ENCODE measurements at regions of chr16 and their contacts with region 1.

Region 1: GRCh38 chr16:86575754-86576557 is 2.4 kb upstream of the FOXL1 start:
- DNase-seq: peak; percentile 83 to 86
- ATAC-seq: peak; percentile 80 to 88 (median 85)
- H3K4me3 ChIP-seq: peak overlapping the region; percentile 7 to 59 (median 49)
- H3K27ac ChIP-seq: peak overlapping the region; percentile 43 to 85 (median 71)
- H3K4me1 ChIP-seq: peaks cover 0 to 67% (median 28%) of the 10 kb centered on the region in 9 donors
- H3K27me3 ChIP-seq: peaks cover 7 to 100% (median 97%) of the 10 kb centered on the region in 7 donors
- CTCF ChIP-seq: peak in 8 of 9 donors; percentile 40 to 78 (median 61)

Region 2: DNA sequence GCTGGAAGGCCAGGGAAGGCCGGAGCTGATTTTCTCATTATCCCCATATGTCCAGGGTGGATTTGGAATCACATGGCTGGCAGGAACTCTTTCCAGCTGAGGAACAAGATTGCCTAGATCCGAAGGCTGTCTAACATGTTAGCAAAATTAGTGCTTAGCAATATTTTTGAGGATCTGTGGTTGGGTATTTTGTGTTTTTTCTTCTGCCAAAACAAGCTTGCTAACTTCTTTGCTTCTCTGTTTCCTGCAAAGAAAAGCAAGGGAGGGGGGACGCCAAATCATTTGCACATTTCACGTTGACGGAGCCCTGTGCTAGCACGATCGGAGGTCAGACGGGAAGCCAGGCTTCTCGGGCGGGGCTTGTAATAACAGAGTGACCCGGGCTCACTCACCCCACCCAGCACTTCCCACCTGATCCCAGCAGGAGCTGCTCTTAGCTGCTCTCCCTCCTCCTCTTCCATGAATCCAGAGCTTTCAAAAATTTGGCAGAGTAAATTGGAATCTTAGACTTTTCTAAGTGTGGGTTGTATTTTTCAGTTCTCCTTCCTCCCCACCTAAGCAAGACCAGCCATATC is 98.9 kb before region 1 on chr16:
- intact Hi-C with region 1: no loop called
- DNase-seq: peak in 1 of 2 donors; percentile 22
- ATAC-seq: peak in 6 of 8 donors; percentile 51 to 89 (median 61)
- H3K4me3 ChIP-seq: no peak overlapping the region
- H3K27ac ChIP-seq: no peak overlapping the region
- H3K4me1 ChIP-seq: peaks cover 0 to 13% (median 0%) of the 10 kb centered on the region in 9 donors
- H3K27me3 ChIP-seq: peaks cover 0 to 96% (median 78%) of the 10 kb centered on the region in 7 donors
- CTCF ChIP-seq: no peak

Region 3: GRCh38 chr16:86531191-86531545 is 44.8 kb before region 1 on chr16:
- intact Hi-C with region 1: no loop called
- DNase-seq: peak; percentile 50 to 69
- ATAC-seq: peak in 7 of 8 donors; percentile 57 to 79 (median 74)
- H3K4me3 ChIP-seq: no peak overlapping the region
- H3K27ac ChIP-seq: peak overlapping the region in 1 of 10 donors; percentile 26
- H3K4me1 ChIP-seq: peaks cover 0 to 8% (median 0%) of the 10 kb centered on the region in 9 donors
- H3K27me3 ChIP-seq: no peaks in the 10 kb centered on the region
- CTCF ChIP-seq: no peak

Region 4: GRCh38 chr16:86664533-86665318 is 88.8 kb after region 1 on chr16:
- intact Hi-C with region 1: loop called in 3 of 10 experiments (anchors 5 to 10 kb)
- DNase-seq: no peak
- ATAC-seq: peak in 2 of 8 donors; percentile 35 to 61
- H3K4me3 ChIP-seq: no peak overlapping the region
- H3K27ac ChIP-seq: peak overlapping the region in 6 of 10 donors; percentile 42 to 78 (median 52)
- H3K4me1 ChIP-seq: peaks cover 0 to 49% (median 25%) of the 10 kb centered on the region in 9 donors
- H3K27me3 ChIP-seq: peaks cover 0 to 38% (median 13%) of the 10 kb centered on the region in 7 donors
- CTCF ChIP-seq: no peak

Region 5: DNA sequence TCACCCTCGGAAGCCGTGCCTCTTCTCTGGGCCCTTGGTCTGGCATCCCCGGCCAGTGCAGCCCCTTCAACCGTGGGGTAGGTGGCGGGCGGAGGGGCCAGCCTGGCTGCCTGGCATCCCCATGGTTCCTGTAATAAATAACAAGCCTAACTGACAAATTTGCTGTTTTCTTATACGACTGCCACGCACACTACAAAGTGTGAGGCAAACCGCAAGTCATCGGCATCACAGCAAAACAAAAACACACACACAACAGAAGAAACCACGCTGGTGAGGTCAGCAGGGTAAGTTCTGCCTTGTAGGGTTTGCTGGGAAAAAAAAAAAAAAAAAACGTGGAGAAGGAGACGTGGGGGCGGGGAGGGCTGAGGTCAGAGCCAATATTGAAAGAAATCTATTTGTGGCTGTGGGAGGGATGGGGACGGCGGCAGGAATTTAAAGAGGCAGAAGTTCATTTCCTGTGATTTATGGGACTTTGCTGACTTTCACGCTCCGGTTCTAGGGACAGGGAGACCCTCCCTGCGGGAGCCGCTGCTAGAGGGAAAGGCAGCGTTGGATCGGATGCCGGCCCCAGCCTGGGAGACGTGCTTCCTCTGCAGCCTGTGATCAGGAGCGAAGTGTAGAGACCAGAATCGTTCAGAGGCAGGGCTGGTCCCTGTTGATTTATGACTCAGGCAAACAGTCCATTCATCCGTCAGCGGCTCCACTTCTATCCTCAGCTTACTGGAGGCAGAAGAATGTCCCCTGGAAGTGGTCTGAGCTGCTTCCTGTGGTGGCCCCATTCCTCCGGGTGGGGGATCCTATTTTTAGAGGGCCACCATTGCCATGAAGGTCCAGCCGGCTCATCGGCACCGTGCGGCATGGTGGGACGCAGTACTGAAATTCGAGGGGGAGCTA is 165.2 kb after region 1 on chr16:
- intact Hi-C with region 1: loop called in 1 of 10 experiments (anchors 5 kb)
- DNase-seq: peak; percentile 54 to 78
- ATAC-seq: peak; percentile 90 to 96 (median 94)
- H3K4me3 ChIP-seq: peak overlapping the region; percentile 1 to 55 (median 44)
- H3K27ac ChIP-seq: peak overlapping the region; percentile 59 to 90 (median 79)
- H3K4me1 ChIP-seq: peaks cover 0 to 17% (median 5%) of the 10 kb centered on the region in 9 donors
- H3K27me3 ChIP-seq: peaks cover 0 to 24% (median 0%) of the 10 kb centered on the region in 7 donors
- CTCF ChIP-seq: no peak

Region 6: GRCh38 chr16:86761111-86762031 is 185.4 kb after region 1 on chr16:
- intact Hi-C with region 1: loop called in 7 of 10 experiments (anchors 5 to 10 kb)
- DNase-seq: peak; percentile 62 to 79
- ATAC-seq: peak in 7 of 8 donors; percentile 72 to 89 (median 82)
- H3K4me3 ChIP-seq: peak overlapping the region in 6 of 10 donors; percentile 2 to 28 (median 24)
- H3K27ac ChIP-seq: no peak overlapping the region
- H3K4me1 ChIP-seq: peaks cover 0 to 22% (median 6%) of the 10 kb centered on the region in 9 donors
- H3K27me3 ChIP-seq: peaks cover 0 to 93% (median 62%) of the 10 kb centered on the region in 7 donors
- CTCF ChIP-seq: peak; percentile 73 to 85 (median 79)

Region 7: GRCh38 chr16:87062569-87063442 is 486.9 kb after region 1 on chr16:
- intact Hi-C with region 1: loop called in 1 of 10 experiments (anchors 5 kb)
- DNase-seq: peak; percentile 73
- ATAC-seq: peak; percentile 88 to 93 (median 90)
- H3K4me3 ChIP-seq: peak overlapping the region in 3 of 10 donors; percentile 3 to 21 (median 15)
- H3K27ac ChIP-seq: no peak overlapping the region
- H3K4me1 ChIP-seq: peaks cover 0 to 16% (median 2%) of the 10 kb centered on the region in 9 donors
- H3K27me3 ChIP-seq: peaks cover 0 to 43% (median 21%) of the 10 kb centered on the region in 7 donors
- CTCF ChIP-seq: peak; percentile 63 to 83 (median 79)